ENCODE measurements at regions of chr17 and their contacts with region 1.

Region 1: GRCh38 chr17:65556014-65556909 is 5.2 kb downstream of the AXIN2 start:
- DNase-seq: peak; percentile 89
- H3K4me3 ChIP-seq: peak overlapping the region in 2 of 4 donors; percentile 11 to 16
- H3K27ac ChIP-seq: no peak overlapping the region
- H3K4me1 ChIP-seq: peaks cover 0 to 43% (median 0%) of the 10 kb centered on the region in 4 donors
- H3K27me3 ChIP-seq: no peaks in the 10 kb centered on the region
- CTCF ChIP-seq: peak; percentile 63 to 78 (median 73)
- EP300 ChIP-seq: no peak
- POLR2A ChIP-seq: no peak

Region 2: GRCh38 chr17:65294179-65294720 is 262.0 kb before region 1 on chr17:
- intact Hi-C with region 1: loop called (anchors 2 kb)
- DNase-seq: peak; percentile 76
- H3K4me3 ChIP-seq: no peak overlapping the region
- H3K27ac ChIP-seq: no peak overlapping the region
- H3K4me1 ChIP-seq: peaks cover 0 to 9% (median 0%) of the 10 kb centered on the region in 4 donors
- H3K27me3 ChIP-seq: no peaks in the 10 kb centered on the region
- CTCF ChIP-seq: peak in 3 of 4 experiments; percentile 70 to 83 (median 72)
- EP300 ChIP-seq: no peak
- POLR2A ChIP-seq: no peak

Region 3: GRCh38 chr17:65455972-65456343 is 100.3 kb before region 1 on chr17:
- intact Hi-C with region 1: loop called (anchors 10 kb)
- DNase-seq: no peak
- H3K4me3 ChIP-seq: no peak overlapping the region
- H3K27ac ChIP-seq: peak overlapping the region in 2 of 4 donors; percentile 12 to 53
- H3K4me1 ChIP-seq: peaks cover 0 to 18% (median 16%) of the 10 kb centered on the region in 4 donors
- H3K27me3 ChIP-seq: no peaks in the 10 kb centered on the region
- CTCF ChIP-seq: peak in 3 of 4 experiments; percentile 8 to 39 (median 21)
- EP300 ChIP-seq: no peak
- POLR2A ChIP-seq: no peak

Region 4: DNA sequence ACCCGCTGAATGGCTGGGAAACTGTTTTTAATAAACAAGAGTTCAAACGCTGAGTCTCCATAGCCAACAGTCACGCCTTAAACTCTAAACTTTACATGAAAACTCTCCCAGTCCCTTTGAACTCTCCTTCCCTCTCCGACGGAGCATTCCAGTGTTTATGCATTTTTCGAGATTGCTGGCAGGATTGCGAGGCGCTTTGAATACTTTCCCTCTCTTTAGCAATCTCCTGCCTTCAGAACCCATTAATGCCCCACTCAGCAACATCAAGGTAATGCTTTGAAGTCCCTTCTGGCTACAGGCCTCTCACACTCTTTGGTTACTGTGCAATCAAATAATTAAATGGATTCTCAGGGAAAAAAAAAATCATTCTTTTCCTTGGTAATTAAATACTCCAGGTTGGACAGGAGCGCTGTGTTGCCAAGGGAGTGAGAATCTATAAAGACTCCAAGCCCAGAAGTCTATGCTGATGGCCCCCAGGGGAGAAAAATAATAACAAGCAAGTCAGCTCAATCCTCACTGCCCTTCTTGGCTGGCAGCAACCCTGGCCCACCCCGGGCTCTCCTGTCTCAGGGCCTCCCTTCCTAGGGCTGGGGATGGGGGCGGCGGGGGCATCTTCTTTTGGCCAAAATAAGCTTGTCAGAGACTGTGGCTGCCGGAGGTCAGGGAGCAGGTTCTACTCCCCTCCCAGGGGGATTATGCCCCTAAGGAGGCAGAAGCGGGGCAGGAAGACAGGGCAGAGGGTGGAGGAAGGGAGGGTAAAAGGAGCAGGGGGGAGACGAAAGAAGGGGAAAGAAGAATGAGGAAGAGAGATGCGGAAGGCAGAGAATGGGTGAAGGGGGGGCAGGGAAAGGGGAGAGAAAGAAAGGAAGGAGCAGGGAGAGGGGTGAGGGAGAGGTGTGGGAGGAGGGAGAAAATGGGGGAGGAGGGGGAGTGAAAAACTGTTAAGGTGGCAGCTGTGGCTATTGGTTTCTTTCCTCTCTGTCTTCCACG is 40.0 kb before region 1 on chr17:
- intact Hi-C with region 1: loop called (anchors 5 kb)
- DNase-seq: peak; percentile 43
- H3K4me3 ChIP-seq: no peak overlapping the region
- H3K27ac ChIP-seq: peak overlapping the region; percentile 12 to 88 (median 62)
- H3K4me1 ChIP-seq: peaks cover 0 to 28% (median 27%) of the 10 kb centered on the region in 4 donors
- H3K27me3 ChIP-seq: no peaks in the 10 kb centered on the region
- CTCF ChIP-seq: no peak
- EP300 ChIP-seq: no peak
- POLR2A ChIP-seq: no peak

Region 5: GRCh38 chr17:65712383-65713267 is 156.4 kb after region 1 on chr17:
- intact Hi-C with region 1: loop called (anchors 2 kb)
- DNase-seq: peak; percentile 81
- H3K4me3 ChIP-seq: peak overlapping the region in 2 of 4 donors; percentile 12 to 25
- H3K27ac ChIP-seq: peak overlapping the region; percentile 56 to 84 (median 69)
- H3K4me1 ChIP-seq: peaks cover 0 to 26% (median 23%) of the 10 kb centered on the region in 4 donors
- H3K27me3 ChIP-seq: no peaks in the 10 kb centered on the region
- CTCF ChIP-seq: no peak
- EP300 ChIP-seq: peak; percentile 89 to 99 (median 94)
- POLR2A ChIP-seq: no peak

Region 6: GRCh38 chr17:65785109-65785508 is 228.8 kb after region 1 on chr17:
- intact Hi-C with region 1: loop called (anchors 5 kb)
- DNase-seq: no peak
- H3K4me3 ChIP-seq: no peak overlapping the region
- H3K27ac ChIP-seq: peak overlapping the region; percentile 43 to 78 (median 60)
- H3K4me1 ChIP-seq: peaks cover 0 to 33% (median 26%) of the 10 kb centered on the region in 4 donors
- H3K27me3 ChIP-seq: no peaks in the 10 kb centered on the region
- CTCF ChIP-seq: no peak
- EP300 ChIP-seq: peak in 3 of 4 donors; percentile 18 to 69 (median 30)
- POLR2A ChIP-seq: no peak

Region 7: GRCh38 chr17:66165513-66166123 is 609.4 kb after region 1 on chr17:
- intact Hi-C with region 1: loop called (anchors 5 kb)
- DNase-seq: no peak
- H3K4me3 ChIP-seq: no peak overlapping the region
- H3K27ac ChIP-seq: no peak overlapping the region
- H3K4me1 ChIP-seq: peaks cover 0 to 15% (median 12%) of the 10 kb centered on the region in 4 donors
- H3K27me3 ChIP-seq: no peaks in the 10 kb centered on the region
- CTCF ChIP-seq: peak; percentile 36 to 75 (median 68)
- EP300 ChIP-seq: no peak
- POLR2A ChIP-seq: no peak

Measured in sigmoid colon (tissue), 7 donors.